ENCODE measurements at regions of chr14 and their contacts with region 1.

Region 1: DNA sequence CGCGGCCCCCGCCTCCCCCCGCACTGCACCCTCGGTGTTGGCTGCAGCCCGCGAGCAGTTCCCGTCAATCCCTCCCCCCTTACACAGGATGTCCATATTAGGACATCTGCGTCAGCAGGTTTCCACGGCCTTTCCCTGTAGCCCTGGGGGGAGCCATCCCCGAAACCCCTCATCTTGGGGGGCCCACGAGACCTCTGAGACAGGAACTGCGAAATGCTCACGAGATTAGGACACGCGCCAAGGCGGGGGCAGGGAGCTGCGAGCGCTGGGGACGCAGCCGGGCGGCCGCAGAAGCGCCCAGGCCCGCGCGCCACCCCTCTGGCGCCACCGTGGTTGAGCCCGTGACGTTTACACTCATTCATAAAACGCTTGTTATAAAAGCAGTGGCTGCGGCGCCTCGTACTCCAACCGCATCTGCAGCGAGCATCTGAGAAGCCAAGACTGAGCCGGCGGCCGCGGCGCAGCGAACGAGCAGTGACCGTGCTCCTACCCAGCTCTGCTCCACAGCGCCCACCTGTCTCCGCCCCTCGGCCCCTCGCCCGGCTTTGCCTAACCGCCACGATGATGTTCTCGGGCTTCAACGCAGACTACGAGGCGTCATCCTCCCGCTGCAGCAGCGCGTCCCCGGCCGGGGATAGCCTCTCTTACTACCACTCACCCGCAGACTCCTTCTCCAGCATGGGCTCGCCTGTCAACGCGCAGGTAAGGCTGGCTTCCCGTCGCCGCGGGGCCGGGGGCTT is at the start of gene FOS:
- DNase-seq: peak; percentile 92 to 98
- H3K4me3 ChIP-seq: peak within 1 kb of the TSS; percentile 90
- H3K27ac ChIP-seq: peak within 1 kb of the TSS; percentile 95
- H3K4me1 ChIP-seq: peaks cover 51% of the 10 kb centered on the region
- H3K27me3 ChIP-seq: no peaks in the 10 kb centered on the region
- CTCF ChIP-seq: no peak
- total RNA-seq, gene FOS: 84.6 and 154 TPM in 2 replicates

Region 2: GRCh38 chr14:75182841-75183624 is 95.6 kb before region 1 on chr14:
- CTCF ChIA-PET with region 1: interaction called, 3 read pairs
- POLR2A ChIA-PET with region 1: interaction called, 19 read pairs
- intact Hi-C with region 1: no loop called
- DNase-seq: peak; percentile 53 to 94
- H3K4me3 ChIP-seq: no peak overlapping the region
- H3K27ac ChIP-seq: peak overlapping the region; percentile 63
- H3K4me1 ChIP-seq: peaks cover 39% of the 10 kb centered on the region
- H3K27me3 ChIP-seq: no peaks in the 10 kb centered on the region
- CTCF ChIP-seq: no peak; the same call in 1 of the 2 replicates

Region 3: DNA sequence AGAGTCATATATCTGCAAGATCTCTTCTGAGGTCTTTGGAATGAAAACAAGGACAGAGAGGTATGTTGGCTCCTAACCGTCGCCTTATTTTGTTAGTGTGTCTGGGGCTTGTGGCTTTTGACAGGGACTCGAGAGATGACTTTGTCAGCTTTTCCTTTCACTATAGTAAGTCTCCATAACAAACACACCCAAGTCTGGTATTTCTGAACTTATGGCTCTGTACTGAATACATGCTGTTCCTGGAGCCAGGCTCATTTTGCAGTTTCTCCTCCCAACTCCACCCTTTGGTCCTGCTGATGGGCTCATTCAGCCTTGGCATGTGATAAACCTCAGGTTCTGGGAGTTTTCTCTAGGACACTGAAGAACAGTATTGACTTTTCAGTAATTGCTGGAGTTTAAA is 74.5 kb before region 1 on chr14:
- CTCF ChIA-PET with region 1: interaction called, 3 read pairs
- POLR2A ChIA-PET with region 1: interaction called, 25 read pairs
- intact Hi-C with region 1: loop called (anchors 1 kb)
- DNase-seq: peak; percentile 67 to 75
- H3K4me3 ChIP-seq: no peak overlapping the region
- H3K27ac ChIP-seq: peak overlapping the region; percentile 3
- H3K4me1 ChIP-seq: peaks cover 66% of the 10 kb centered on the region
- H3K27me3 ChIP-seq: no peaks in the 10 kb centered on the region
- CTCF ChIP-seq: no peak

Region 4: GRCh38 chr14:75249251-75249957 is 29.2 kb before region 1 on chr14:
- CTCF ChIA-PET with region 1: no interaction called
- POLR2A ChIA-PET with region 1: interaction called, 16 read pairs
- intact Hi-C with region 1: loop called (anchors 1 kb)
- DNase-seq: peak; percentile 48 to 72
- H3K4me3 ChIP-seq: no peak overlapping the region; the same call in 1 of the 2 replicates
- H3K27ac ChIP-seq: peak overlapping the region; percentile 51
- H3K4me1 ChIP-seq: peaks cover 60% of the 10 kb centered on the region
- H3K27me3 ChIP-seq: no peaks in the 10 kb centered on the region
- CTCF ChIP-seq: no peak

Region 5: GRCh38 chr14:75350505-75351060 is 72.0 kb after region 1 on chr14:
- CTCF ChIA-PET with region 1: no interaction called
- POLR2A ChIA-PET with region 1: no interaction called
- intact Hi-C with region 1: no loop called
- DNase-seq: no peak
- H3K4me3 ChIP-seq: no peak overlapping the region
- H3K27ac ChIP-seq: no peak overlapping the region
- H3K4me1 ChIP-seq: no peaks in the 10 kb centered on the region
- H3K27me3 ChIP-seq: no peaks in the 10 kb centered on the region
- CTCF ChIP-seq: no peak

Measured in PC-9 (cell line).